ENCODE measurements at regions of chr12 and their contacts with region 1.

Region 1: DNA sequence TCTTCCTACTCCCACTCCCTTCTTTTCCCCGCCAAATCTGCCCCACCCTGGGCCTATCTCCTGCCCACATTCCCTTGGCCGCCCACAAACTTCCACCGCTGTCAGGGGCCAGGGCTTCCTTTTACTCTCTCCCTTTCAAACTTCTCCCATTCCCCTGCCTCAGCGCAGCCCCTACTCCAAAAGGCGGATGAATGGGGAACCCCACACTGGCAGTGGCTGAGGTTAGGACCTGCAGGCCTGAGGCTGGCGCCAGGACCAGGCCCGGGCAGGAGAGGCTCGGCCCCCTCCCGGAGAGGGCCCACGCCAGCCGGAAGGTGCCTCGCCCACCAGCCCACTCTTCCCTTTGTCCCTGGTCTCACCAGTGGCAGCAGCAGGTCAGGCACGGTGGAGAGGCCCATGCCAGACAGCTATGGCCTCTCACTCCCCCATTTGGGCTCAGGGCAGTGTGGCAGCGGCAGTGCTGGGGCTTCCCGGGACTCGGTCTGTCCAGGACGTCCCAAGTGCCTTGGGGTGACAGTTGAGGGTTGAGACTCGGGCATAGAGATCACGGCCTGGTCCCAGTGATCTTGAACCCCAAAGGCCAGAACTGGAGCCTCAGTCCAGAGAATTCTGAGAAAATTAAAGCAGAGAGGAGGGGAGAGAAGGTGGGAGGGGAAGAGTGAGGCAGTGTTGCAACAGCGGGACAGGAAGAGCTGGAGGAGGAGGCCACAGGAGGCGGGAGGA is at the start of gene TNFRSF1A:
- DNase-seq: peak; percentile 81
- ATAC-seq: peak; percentile 82 to 83
- H3K4me3 ChIP-seq: peak within 1 kb of the TSS; percentile 94
- H3K27ac ChIP-seq: peak within 1 kb of the TSS; percentile 97
- H3K4me1 ChIP-seq: peaks cover 63% of the 10 kb centered on the region
- H3K27me3 ChIP-seq: no peaks in the 10 kb centered on the region
- CTCF ChIP-seq: no peak
- total RNA-seq, gene TNFRSF1A: 165 TPM

Region 2: DNA sequence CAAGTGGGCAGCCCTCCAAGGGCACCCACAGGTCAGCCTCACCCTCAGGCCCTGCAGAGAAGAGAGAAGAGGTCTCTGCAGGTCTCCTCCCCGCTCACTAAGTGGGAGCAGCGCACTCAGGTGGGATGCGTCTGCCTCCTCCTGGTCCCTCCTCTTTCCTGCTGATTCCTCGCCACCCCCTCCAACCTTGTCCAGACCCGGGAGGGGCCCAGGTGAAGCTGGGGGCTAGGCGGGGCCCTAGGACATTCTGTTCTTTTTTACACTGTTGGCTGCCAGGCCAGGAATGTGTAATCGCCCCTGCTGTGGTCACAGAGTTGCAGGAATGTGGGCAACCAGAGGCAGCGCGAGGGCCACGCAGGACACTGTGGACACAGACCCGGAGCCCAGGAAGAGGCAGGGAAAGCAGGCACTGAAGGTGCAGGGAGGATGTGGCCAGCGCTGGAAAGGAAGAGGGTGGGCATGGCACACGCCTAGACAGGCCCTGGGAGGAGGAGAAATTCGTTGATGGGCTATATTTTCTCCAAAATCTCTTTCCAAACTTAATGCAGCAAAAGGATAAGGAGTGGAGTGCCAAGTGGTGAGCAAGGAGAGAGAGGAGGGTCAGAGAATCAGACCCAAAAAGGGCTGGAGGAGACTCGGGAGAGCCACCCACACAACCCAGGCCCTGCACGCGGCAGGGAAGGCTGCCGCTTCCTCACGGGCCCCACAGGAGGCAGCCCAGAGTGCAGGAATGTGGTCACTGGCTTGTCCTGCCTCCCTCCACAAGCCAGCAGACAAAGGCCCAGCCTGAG is 34.7 kb after region 1 on chr12:
- intact Hi-C with region 1: loop called (anchors 5 kb)
- DNase-seq: peak; percentile 90
- ATAC-seq: peak; percentile 75 to 86
- H3K4me3 ChIP-seq: peak overlapping the region; percentile 56
- H3K27ac ChIP-seq: peak overlapping the region; percentile 82
- H3K4me1 ChIP-seq: peaks cover 73% of the 10 kb centered on the region
- H3K27me3 ChIP-seq: no peaks in the 10 kb centered on the region
- CTCF ChIP-seq: peak; percentile 52